ENCODE measurements at regions of chr12 and their contacts with region 1.

Region 1: GRCh38 chr12:45388545-45388944 is 172.7 kb downstream of the ANO6 start:
- DNase-seq: peak; percentile 49 to 51
- H3K4me3 ChIP-seq: no peak overlapping the region
- H3K4me3 Mint-ChIP-seq: no peak overlapping the region
- H3K27ac Mint-ChIP-seq: no peak overlapping the region
- H3K4me1 ChIP-seq: no peaks in the 10 kb centered on the region
- H3K4me1 Mint-ChIP-seq: peaks cover 5% of the 10 kb centered on the region
- H3K27me3 ChIP-seq: no peaks in the 10 kb centered on the region
- H3K27me3 Mint-ChIP-seq: no peaks in the 10 kb centered on the region
- CTCF ChIP-seq: peak; percentile 59 to 81

Region 2: GRCh38 chr12:45130881-45131281 is 257.7 kb before region 1 on chr12:
- CTCF ChIA-PET with region 1: interaction called, 3 read pairs
- POLR2A ChIA-PET with region 1: no interaction called
- intact Hi-C with region 1: loop called (anchors 1 kb)
- DNase-seq: peak; percentile 65 to 74
- H3K4me3 ChIP-seq: no peak overlapping the region
- H3K4me3 Mint-ChIP-seq: no peak overlapping the region
- H3K27ac Mint-ChIP-seq: no peak overlapping the region
- H3K4me1 ChIP-seq: no peaks in the 10 kb centered on the region
- H3K4me1 Mint-ChIP-seq: no peaks in the 10 kb centered on the region
- H3K27me3 ChIP-seq: no peaks in the 10 kb centered on the region
- H3K27me3 Mint-ChIP-seq: no peaks in the 10 kb centered on the region
- CTCF ChIP-seq: peak; percentile 77 to 85

Region 3: GRCh38 chr12:45170456-45171042 is 218.0 kb before region 1 on chr12:
- CTCF ChIA-PET with region 1: interaction called, 7 read pairs
- POLR2A ChIA-PET with region 1: no interaction called
- intact Hi-C with region 1: loop called (anchors 1 kb)
- DNase-seq: peak; percentile 84 to 90
- H3K4me3 ChIP-seq: no peak overlapping the region
- H3K4me3 Mint-ChIP-seq: no peak overlapping the region
- H3K27ac Mint-ChIP-seq: no peak overlapping the region
- H3K4me1 ChIP-seq: no peaks in the 10 kb centered on the region
- H3K4me1 Mint-ChIP-seq: peaks cover 12% of the 10 kb centered on the region
- H3K27me3 ChIP-seq: no peaks in the 10 kb centered on the region
- H3K27me3 Mint-ChIP-seq: no peaks in the 10 kb centered on the region
- CTCF ChIP-seq: peak; percentile 94 to 95

Region 4: GRCh38 chr12:45183246-45183645 is 205.3 kb before region 1 on chr12:
- CTCF ChIA-PET with region 1: interaction called, 11 read pairs
- POLR2A ChIA-PET with region 1: no interaction called
- intact Hi-C with region 1: loop called (anchors 1 kb)
- DNase-seq: no peak
- H3K4me3 ChIP-seq: no peak overlapping the region
- H3K4me3 Mint-ChIP-seq: no peak overlapping the region
- H3K27ac Mint-ChIP-seq: no peak overlapping the region
- H3K4me1 ChIP-seq: peaks cover 21% of the 10 kb centered on the region
- H3K4me1 Mint-ChIP-seq: peaks cover 15% of the 10 kb centered on the region
- H3K27me3 ChIP-seq: no peaks in the 10 kb centered on the region
- H3K27me3 Mint-ChIP-seq: no peaks in the 10 kb centered on the region
- CTCF ChIP-seq: peak; percentile 41 to 53

Region 5: DNA sequence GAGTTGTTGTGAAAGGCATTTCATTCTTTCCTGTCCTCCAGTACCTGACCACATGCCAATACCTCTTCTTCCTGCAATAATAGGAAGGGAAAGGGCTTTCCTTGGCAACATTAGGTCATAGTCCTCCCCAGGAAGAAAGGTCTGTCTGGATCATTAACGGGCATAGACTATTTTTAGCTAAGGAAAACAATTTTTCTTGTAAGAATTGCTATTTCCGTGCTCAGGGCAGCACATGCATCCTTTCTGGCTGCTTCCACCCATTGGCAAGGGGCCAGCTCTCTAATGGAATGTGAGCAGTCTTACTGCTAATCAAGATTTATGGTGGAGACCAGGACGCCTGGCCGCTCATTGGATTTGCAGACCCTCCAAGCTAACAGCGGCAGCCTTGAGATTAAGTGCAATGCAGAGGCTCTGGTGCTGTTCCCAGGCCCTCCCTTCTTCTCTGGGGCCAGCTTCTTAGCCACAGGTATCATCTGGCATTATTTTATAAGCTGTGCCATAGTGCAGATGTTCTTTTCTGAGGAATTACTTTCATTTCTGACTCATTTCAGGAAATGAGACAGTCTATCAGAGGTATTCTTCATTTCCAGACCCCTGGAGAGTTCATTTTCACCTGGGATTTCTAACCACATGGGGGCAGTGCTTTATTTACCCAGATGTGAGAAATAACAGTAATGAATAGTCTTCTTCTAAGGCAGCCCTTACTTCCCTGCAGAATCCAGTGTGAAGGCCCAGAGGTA is 119.7 kb before region 1 on chr12:
- CTCF ChIA-PET with region 1: interaction called, 5 read pairs
- POLR2A ChIA-PET with region 1: no interaction called
- intact Hi-C with region 1: loop called (anchors 1 kb)
- DNase-seq: peak in 1 of 2 experiments; percentile 62
- H3K4me3 ChIP-seq: no peak overlapping the region
- H3K4me3 Mint-ChIP-seq: no peak overlapping the region
- H3K27ac Mint-ChIP-seq: peak overlapping the region; percentile 13
- H3K4me1 ChIP-seq: peaks cover 62% of the 10 kb centered on the region
- H3K4me1 Mint-ChIP-seq: peaks cover 48% of the 10 kb centered on the region
- H3K27me3 ChIP-seq: no peaks in the 10 kb centered on the region
- H3K27me3 Mint-ChIP-seq: no peaks in the 10 kb centered on the region
- CTCF ChIP-seq: peak; percentile 45 to 63

Region 6: DNA sequence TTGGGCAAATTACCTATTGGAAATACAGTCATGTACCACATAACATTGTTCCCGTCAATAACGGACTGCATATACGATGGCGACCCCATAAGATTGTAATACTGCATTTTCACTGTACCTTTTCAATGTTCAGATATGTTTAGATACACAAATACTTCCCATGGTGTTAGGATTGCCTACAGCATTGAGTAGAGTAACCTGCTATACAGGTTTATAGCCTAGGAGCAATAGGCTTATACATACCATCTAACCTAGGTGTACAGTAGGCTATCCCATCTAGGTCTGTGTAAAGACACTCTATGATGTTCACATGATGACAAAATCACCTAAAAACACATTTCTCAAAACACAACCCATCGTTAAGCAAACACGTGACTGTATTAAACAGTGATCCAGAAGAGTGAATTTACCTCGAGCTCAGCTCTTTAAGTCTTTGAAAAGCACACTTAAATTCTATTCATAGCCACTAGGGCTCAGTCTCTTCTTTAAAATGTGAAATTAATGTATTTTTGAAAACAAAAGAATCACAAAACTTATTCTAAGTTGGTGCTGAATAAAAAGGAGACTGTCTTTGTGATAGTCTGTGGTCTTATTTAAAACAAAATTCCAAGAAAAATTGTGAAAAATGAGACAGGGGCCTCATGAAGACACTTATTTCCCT is 101.8 kb after region 1 on chr12:
- CTCF ChIA-PET with region 1: no interaction called
- POLR2A ChIA-PET with region 1: no interaction called
- intact Hi-C with region 1: no loop called
- DNase-seq: peak in 1 of 2 experiments; percentile 19
- H3K4me3 ChIP-seq: no peak overlapping the region
- H3K4me3 Mint-ChIP-seq: no peak overlapping the region
- H3K27ac Mint-ChIP-seq: no peak overlapping the region
- H3K4me1 ChIP-seq: peaks cover 5% of the 10 kb centered on the region; the same call in 1 of the 2 replicates
- H3K4me1 Mint-ChIP-seq: no peaks in the 10 kb centered on the region
- H3K27me3 ChIP-seq: no peaks in the 10 kb centered on the region
- H3K27me3 Mint-ChIP-seq: no peaks in the 10 kb centered on the region
- CTCF ChIP-seq: peak in 1 of 2 experiments; percentile 12

Region 7: DNA sequence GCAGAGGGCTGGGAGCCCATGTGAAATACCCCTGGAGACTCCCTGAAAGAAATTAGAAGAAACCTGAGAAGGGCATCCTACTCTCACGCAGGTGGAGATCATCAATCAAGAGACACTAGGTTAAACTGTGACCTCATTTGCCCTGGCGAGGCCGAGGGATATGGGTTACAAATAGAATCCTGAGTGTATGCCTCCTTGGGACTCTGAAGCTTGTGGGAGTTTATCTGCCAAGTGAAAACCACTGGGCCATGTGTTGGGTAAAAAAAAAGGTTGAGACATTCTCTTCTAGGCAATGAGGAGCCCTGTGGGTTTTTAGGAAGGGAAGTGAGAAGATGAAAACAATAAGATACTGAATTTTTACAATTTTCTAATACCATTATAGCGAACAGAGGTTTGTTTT is 180.3 kb after region 1 on chr12:
- CTCF ChIA-PET with region 1: no interaction called
- POLR2A ChIA-PET with region 1: no interaction called
- intact Hi-C with region 1: no loop called
- DNase-seq: no peak
- H3K4me3 ChIP-seq: no peak overlapping the region
- H3K4me3 Mint-ChIP-seq: no peak overlapping the region
- H3K27ac Mint-ChIP-seq: no peak overlapping the region
- H3K4me1 ChIP-seq: peaks cover 24% of the 10 kb centered on the region; the same call in 1 of the 2 replicates
- H3K4me1 Mint-ChIP-seq: no peaks in the 10 kb centered on the region
- H3K27me3 ChIP-seq: no peaks in the 10 kb centered on the region
- H3K27me3 Mint-ChIP-seq: no peaks in the 10 kb centered on the region
- CTCF ChIP-seq: no peak